ENCODE measurements at regions of chr1 and their contacts with region 1.

Region 1: DNA sequence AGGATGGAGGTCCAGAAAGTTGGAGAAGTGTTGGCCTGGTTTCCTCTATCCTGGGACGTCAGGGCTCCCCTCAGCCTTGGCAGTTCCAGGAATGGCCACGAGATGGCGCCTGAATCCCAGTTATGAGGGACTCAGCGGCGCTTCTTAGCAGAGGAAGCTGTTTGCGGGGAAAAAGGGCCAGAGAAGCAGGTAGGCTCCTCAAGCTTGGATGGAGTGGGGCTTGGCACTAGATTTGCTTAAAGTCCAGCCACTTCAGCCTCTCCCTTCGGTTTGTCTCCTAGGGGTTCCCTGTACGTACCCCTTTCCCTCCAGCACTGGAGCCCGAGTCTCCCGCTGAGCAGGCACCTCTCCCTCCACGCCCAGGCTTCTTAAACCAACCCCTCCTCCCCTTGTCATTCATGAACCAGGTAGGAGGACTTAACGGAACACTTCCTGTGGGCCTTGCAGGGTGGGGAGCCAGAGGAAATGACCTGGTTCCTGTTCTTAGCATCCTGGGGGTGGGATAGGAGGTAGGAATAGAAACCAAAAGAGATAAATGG is 32.0 kb upstream of the TENT5B start:
- DNase-seq: peak; percentile 88
- ATAC-seq: peak; percentile 94
- H3K4me3 ChIP-seq: peak overlapping the region in 4 of 5 experiments; percentile 6 to 51 (median 36)
- H3K4me3 Mint-ChIP-seq: peak overlapping the region; percentile 52
- H3K27ac ChIP-seq: no peak overlapping the region
- H3K27ac Mint-ChIP-seq: peak overlapping the region; percentile 6
- H3K4me1 ChIP-seq: peaks cover 6 to 15% of the 10 kb centered on the region in 2 donors
- H3K4me1 Mint-ChIP-seq: peaks cover 15% of the 10 kb centered on the region
- H3K27me3 ChIP-seq: peaks cover 0 to 5% (median 0%) of the 10 kb centered on the region in 4 experiments
- H3K27me3 Mint-ChIP-seq: peaks cover 3% of the 10 kb centered on the region
- CTCF ChIP-seq: peak; percentile 97

Region 2: DNA sequence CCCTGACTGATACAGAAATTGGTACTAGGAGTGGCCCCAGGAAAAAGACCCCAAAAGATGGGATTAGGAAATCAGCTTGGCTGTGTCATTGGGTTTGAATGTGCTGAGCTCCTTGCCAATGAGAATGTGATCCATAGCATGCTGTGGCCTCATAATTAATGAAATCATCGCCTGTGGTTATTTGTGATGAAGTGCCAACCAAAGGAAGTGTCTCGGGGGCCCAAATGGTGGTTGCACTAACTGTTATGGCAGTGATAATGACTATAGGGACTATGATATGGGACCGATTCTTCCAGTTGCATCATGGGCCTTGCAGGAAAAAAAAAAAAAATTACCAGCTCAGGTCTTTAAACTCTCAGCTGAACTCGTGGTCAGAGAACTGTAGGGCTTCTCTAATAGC is 233.6 kb before region 1 on chr1:
- CTCF ChIA-PET with region 1: no interaction called
- POLR2A ChIA-PET with region 1: no interaction called
- intact Hi-C with region 1: no loop called
- DNase-seq: no peak
- ATAC-seq: no peak
- H3K4me3 ChIP-seq: no peak overlapping the region
- H3K4me3 Mint-ChIP-seq: no peak overlapping the region
- H3K27ac ChIP-seq: no peak overlapping the region
- H3K27ac Mint-ChIP-seq: no peak overlapping the region
- H3K4me1 ChIP-seq: no peaks in the 10 kb centered on the region
- H3K4me1 Mint-ChIP-seq: peaks cover 3% of the 10 kb centered on the region
- H3K27me3 ChIP-seq: peaks cover 0 to 6% (median 0%) of the 10 kb centered on the region in 4 experiments
- H3K27me3 Mint-ChIP-seq: no peaks in the 10 kb centered on the region
- CTCF ChIP-seq: no peak

Region 3: DNA sequence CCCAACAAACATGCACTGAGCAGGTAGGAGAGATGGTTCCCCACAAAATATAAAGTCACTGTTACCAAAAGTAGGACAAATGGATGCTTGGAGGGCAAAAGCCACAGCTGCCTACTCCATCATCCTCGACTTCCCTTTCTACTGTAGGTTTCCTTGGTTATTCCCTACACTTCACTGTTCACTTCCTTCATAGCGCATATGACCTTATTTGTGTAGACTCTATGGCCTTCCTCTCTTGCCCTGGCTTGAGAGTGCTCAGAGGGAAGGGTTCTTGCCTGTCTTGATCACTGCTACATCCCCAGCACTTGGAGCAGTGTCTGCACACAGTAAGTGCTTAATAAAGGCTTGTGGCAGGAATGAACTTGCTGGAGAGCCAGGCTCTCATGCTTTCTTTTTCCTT is 65.8 kb before region 1 on chr1:
- CTCF ChIA-PET with region 1: no interaction called
- POLR2A ChIA-PET with region 1: no interaction called
- intact Hi-C with region 1: no loop called
- DNase-seq: no peak
- ATAC-seq: no peak
- H3K4me3 ChIP-seq: no peak overlapping the region
- H3K4me3 Mint-ChIP-seq: no peak overlapping the region
- H3K27ac ChIP-seq: no peak overlapping the region
- H3K27ac Mint-ChIP-seq: no peak overlapping the region
- H3K4me1 ChIP-seq: no peaks in the 10 kb centered on the region
- H3K4me1 Mint-ChIP-seq: no peaks in the 10 kb centered on the region
- H3K27me3 ChIP-seq: peaks cover 0 to 4% (median 3%) of the 10 kb centered on the region in 4 experiments
- H3K27me3 Mint-ChIP-seq: peaks cover 17% of the 10 kb centered on the region
- CTCF ChIP-seq: no peak

Region 4: GRCh38 chr1:26998429-26999300 is 46.0 kb before region 1 on chr1:
- CTCF ChIA-PET with region 1: interaction called, 83 read pairs
- POLR2A ChIA-PET with region 1: no interaction called
- intact Hi-C with region 1: loop called (anchors 1 kb)
- DNase-seq: peak; percentile 13
- ATAC-seq: no peak
- H3K4me3 ChIP-seq: no peak overlapping the region
- H3K4me3 Mint-ChIP-seq: no peak overlapping the region
- H3K27ac ChIP-seq: no peak overlapping the region
- H3K27ac Mint-ChIP-seq: no peak overlapping the region
- H3K4me1 ChIP-seq: peaks cover 28 to 40% of the 10 kb centered on the region in 2 donors
- H3K4me1 Mint-ChIP-seq: peaks cover 30% of the 10 kb centered on the region
- H3K27me3 ChIP-seq: peaks cover 0 to 31% (median 21%) of the 10 kb centered on the region in 4 experiments
- H3K27me3 Mint-ChIP-seq: peaks cover 22% of the 10 kb centered on the region
- CTCF ChIP-seq: no peak

Region 5: GRCh38 chr1:27057801-27058625 is 13.3 kb after region 1 on chr1:
- CTCF ChIA-PET with region 1: interaction called, 61 read pairs
- POLR2A ChIA-PET with region 1: no interaction called
- intact Hi-C with region 1: no loop called
- DNase-seq: no peak
- ATAC-seq: no peak
- H3K4me3 ChIP-seq: no peak overlapping the region
- H3K4me3 Mint-ChIP-seq: no peak overlapping the region
- H3K27ac ChIP-seq: no peak overlapping the region
- H3K27ac Mint-ChIP-seq: no peak overlapping the region
- H3K4me1 ChIP-seq: no peaks in the 10 kb centered on the region
- H3K4me1 Mint-ChIP-seq: no peaks in the 10 kb centered on the region
- H3K27me3 ChIP-seq: no peaks in the 10 kb centered on the region
- H3K27me3 Mint-ChIP-seq: no peaks in the 10 kb centered on the region
- CTCF ChIP-seq: no peak

Region 6: GRCh38 chr1:27097484-27097917 is 52.8 kb after region 1 on chr1:
- CTCF ChIA-PET with region 1: interaction called, 388 read pairs
- POLR2A ChIA-PET with region 1: no interaction called
- intact Hi-C with region 1: loop called (anchors 1 kb)
- DNase-seq: peak; percentile 81
- ATAC-seq: peak; percentile 48
- H3K4me3 ChIP-seq: no peak overlapping the region
- H3K4me3 Mint-ChIP-seq: no peak overlapping the region
- H3K27ac ChIP-seq: no peak overlapping the region
- H3K27ac Mint-ChIP-seq: peak overlapping the region; percentile 53
- H3K4me1 ChIP-seq: peaks cover 12 to 23% of the 10 kb centered on the region in 2 donors
- H3K4me1 Mint-ChIP-seq: peaks cover 20% of the 10 kb centered on the region
- H3K27me3 ChIP-seq: no peaks in the 10 kb centered on the region
- H3K27me3 Mint-ChIP-seq: no peaks in the 10 kb centered on the region
- CTCF ChIP-seq: peak; percentile 95

Region 7: DNA sequence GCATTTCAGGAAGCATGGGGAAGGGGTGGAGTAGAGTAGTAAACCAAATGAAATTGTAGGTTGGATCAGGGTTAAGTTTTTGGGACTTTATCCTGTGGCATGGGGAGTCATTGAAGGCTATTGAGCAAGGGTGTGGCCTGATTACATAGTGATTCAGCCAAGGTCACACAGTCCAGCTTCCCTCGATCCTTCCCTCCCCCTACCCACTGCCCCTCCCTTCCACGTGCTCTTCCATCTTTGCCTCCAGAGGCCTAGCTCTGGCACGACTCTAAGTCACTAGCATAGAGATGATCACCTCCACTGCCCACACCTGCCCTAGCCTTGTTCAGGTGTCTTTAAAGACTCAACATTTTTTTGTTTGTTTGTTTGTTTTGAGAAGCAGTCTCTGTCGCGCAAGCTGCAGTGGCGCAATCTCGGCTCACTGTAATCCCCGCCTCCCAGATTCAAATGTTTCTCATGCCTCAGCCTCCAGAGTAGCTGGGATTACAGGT is 147.4 kb after region 1 on chr1:
- CTCF ChIA-PET with region 1: interaction called, 19 read pairs
- POLR2A ChIA-PET with region 1: no interaction called
- intact Hi-C with region 1: no loop called
- DNase-seq: no peak
- ATAC-seq: no peak
- H3K4me3 ChIP-seq: no peak overlapping the region
- H3K4me3 Mint-ChIP-seq: no peak overlapping the region
- H3K27ac ChIP-seq: no peak overlapping the region
- H3K27ac Mint-ChIP-seq: no peak overlapping the region
- H3K4me1 ChIP-seq: no peaks in the 10 kb centered on the region
- H3K4me1 Mint-ChIP-seq: no peaks in the 10 kb centered on the region
- H3K27me3 ChIP-seq: no peaks in the 10 kb centered on the region
- H3K27me3 Mint-ChIP-seq: no peaks in the 10 kb centered on the region
- CTCF ChIP-seq: no peak

Region 8: GRCh38 chr1:27284425-27285273 is 240.0 kb after region 1 on chr1:
- CTCF ChIA-PET with region 1: interaction called, 62 read pairs
- POLR2A ChIA-PET with region 1: no interaction called
- intact Hi-C with region 1: loop called (anchors 1 kb)
- DNase-seq: peak; percentile 88
- ATAC-seq: peak; percentile 93
- H3K4me3 ChIP-seq: no peak overlapping the region
- H3K4me3 Mint-ChIP-seq: no peak overlapping the region
- H3K27ac ChIP-seq: peak overlapping the region in 1 of 2 donors; percentile 47
- H3K27ac Mint-ChIP-seq: no peak overlapping the region
- H3K4me1 ChIP-seq: peaks cover 0 to 9% of the 10 kb centered on the region in 2 donors
- H3K4me1 Mint-ChIP-seq: peaks cover 12% of the 10 kb centered on the region
- H3K27me3 ChIP-seq: no peaks in the 10 kb centered on the region
- H3K27me3 Mint-ChIP-seq: no peaks in the 10 kb centered on the region
- CTCF ChIP-seq: peak; percentile 87

Measured in B cell (primary cell).